WTC11 (cell line): ENCODE measurements at regions of chr15 and their contacts with region 1.

Region 1: DNA sequence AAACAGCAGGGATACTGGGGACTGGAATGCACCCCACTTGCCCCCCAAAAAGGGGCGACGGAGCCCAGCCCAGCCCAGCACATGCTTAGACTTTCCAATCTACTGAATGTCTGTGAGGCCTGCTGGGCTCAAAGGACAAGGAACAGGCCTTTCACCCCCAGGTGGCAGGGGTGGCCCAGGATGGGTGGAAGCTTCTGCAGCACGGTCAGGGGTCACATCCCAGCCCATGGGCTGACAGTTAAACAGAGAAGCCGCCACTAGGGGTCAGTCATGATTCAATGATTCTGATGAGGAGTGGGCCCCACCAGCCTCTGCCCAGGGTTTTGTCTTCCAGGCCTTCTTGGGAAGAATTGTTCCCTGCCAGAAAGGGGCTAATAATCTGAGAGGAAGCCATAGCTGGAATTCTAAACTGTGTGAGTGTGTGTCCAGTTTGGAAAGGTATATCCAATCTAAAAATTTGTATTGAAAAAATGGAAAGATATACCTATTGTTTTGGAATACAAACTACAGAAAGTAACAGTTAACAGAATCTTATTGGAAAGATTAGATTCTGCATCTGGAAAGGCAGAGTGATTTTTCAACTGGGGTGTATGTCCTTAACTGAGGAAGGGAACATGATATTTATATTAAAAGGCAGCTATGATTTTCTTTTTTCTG is 2.2 kb downstream of the CHRNB4 start:
- DNase-seq: peak; percentile 91
- ATAC-seq: peak; percentile 62
- H3K4me3 Mint-ChIP-seq: no peak overlapping the region
- H3K27ac Mint-ChIP-seq: no peak overlapping the region
- H3K4me1 Mint-ChIP-seq: peaks cover 19% of the 10 kb centered on the region
- H3K27me3 Mint-ChIP-seq: peaks cover 11% of the 10 kb centered on the region
- CTCF ChIP-seq: peak; percentile 59; the same call in 1 of the 2 replicates

Region 2: GRCh38 chr15:78618490-78618934 is 20.3 kb before region 1 on chr15:
- CTCF ChIA-PET with region 1: interaction called, 75 read pairs
- POLR2A ChIA-PET with region 1: interaction called, 3 read pairs
- DNase-seq: peak; percentile 94
- ATAC-seq: peak; percentile 24
- H3K4me3 Mint-ChIP-seq: peak overlapping the region; percentile 33
- H3K27ac Mint-ChIP-seq: no peak overlapping the region
- H3K4me1 Mint-ChIP-seq: peaks cover 23% of the 10 kb centered on the region
- H3K27me3 Mint-ChIP-seq: peaks cover 48% of the 10 kb centered on the region
- CTCF ChIP-seq: peak; percentile 66

Region 3: GRCh38 chr15:78671626-78672211 is 32.9 kb after region 1 on chr15:
- CTCF ChIA-PET with region 1: interaction called, 19 read pairs
- POLR2A ChIA-PET with region 1: no interaction called
- DNase-seq: peak; percentile 30
- ATAC-seq: peak; percentile 80
- H3K4me3 Mint-ChIP-seq: peak overlapping the region; percentile 15; the same call in 1 of the 2 replicates
- H3K27ac Mint-ChIP-seq: peak overlapping the region; percentile 84
- H3K4me1 Mint-ChIP-seq: peaks cover 73% of the 10 kb centered on the region
- H3K27me3 Mint-ChIP-seq: peaks cover 55% of the 10 kb centered on the region
- CTCF ChIP-seq: no peak

Region 4: GRCh38 chr15:78695854-78696253 is 57.1 kb after region 1 on chr15:
- CTCF ChIA-PET with region 1: interaction called, 12 read pairs
- POLR2A ChIA-PET with region 1: no interaction called
- DNase-seq: no peak
- ATAC-seq: peak; percentile 80
- H3K4me3 Mint-ChIP-seq: no peak overlapping the region
- H3K27ac Mint-ChIP-seq: no peak overlapping the region
- H3K4me1 Mint-ChIP-seq: peaks cover 29% of the 10 kb centered on the region
- H3K27me3 Mint-ChIP-seq: no peaks in the 10 kb centered on the region; the same call in 1 of the 2 replicates
- CTCF ChIP-seq: no peak

Region 5: DNA sequence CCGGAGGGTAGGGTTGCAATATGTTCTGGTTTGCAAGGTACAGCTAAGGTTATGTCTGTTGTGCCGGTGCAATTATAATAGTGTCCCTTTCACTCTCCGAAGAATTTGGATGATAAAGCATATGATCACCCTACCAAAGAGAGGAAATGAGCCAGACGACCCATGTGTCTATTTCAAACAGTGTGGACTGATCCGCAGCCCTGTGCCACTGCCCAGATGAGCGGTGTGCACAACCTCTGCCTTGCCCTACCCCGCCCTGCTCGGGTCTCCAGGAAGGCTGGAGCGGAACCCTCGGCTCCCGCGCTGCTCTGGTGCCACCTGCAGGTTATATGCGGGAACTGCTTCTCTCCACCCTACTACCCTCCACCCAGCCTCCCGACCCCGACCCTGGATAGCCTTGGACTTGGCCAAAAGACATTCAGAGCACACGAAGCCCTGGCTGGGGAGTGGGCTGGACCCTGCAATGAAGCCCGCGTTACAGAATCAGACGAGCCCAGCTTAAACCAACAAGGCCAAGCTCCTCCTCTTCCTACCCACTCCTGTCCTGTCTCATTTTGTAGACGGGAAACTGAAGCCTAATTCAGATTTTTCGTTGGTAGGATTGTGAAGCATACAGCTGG is 70.6 kb after region 1 on chr15:
- CTCF ChIA-PET with region 1: interaction called, 67 read pairs
- POLR2A ChIA-PET with region 1: no interaction called
- DNase-seq: peak; percentile 90
- ATAC-seq: peak; percentile 100
- H3K4me3 Mint-ChIP-seq: no peak overlapping the region
- H3K27ac Mint-ChIP-seq: no peak overlapping the region
- H3K4me1 Mint-ChIP-seq: peaks cover 9% of the 10 kb centered on the region
- H3K27me3 Mint-ChIP-seq: peaks cover 19% of the 10 kb centered on the region
- CTCF ChIP-seq: peak; percentile 91

Region 6: DNA sequence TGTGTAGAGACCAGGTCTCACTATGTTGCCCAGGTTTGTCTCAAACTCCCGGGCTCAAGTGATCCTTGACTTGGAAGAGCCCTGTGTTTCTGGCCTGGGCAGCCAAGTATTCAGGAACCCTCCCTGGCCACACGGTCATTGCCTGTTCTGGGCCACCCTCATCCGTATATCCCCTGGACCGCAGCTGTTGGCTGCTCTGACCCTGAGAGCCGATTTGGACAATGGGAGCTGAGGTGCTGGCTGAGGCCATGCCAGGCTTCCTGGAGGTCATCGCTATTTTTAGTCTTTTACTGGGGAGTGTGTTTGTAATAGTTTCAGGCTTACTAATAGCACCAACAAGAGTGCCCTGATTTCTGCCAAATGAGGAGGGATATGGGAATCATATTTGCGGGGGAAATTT is 111.8 kb after region 1 on chr15:
- CTCF ChIA-PET with region 1: interaction called, 22 read pairs
- POLR2A ChIA-PET with region 1: no interaction called
- DNase-seq: no peak
- ATAC-seq: no peak
- H3K4me3 Mint-ChIP-seq: peak overlapping the region; percentile 58
- H3K27ac Mint-ChIP-seq: no peak overlapping the region
- H3K4me1 Mint-ChIP-seq: peaks cover 4% of the 10 kb centered on the region
- H3K27me3 Mint-ChIP-seq: no peaks in the 10 kb centered on the region
- CTCF ChIP-seq: no peak